ENCODE measurements at regions of chr19 and their contacts with region 1.

Region 1: GRCh38 chr19:23321948-23322549 is 71.9 kb upstream of the ZNF724 start:
- DNase-seq: no peak
- ATAC-seq: peak in 1 of 8 donors; percentile 24
- H3K4me3 ChIP-seq: no peak overlapping the region
- H3K27ac ChIP-seq: no peak overlapping the region
- H3K4me1 ChIP-seq: no peaks in the 10 kb centered on the region
- H3K27me3 ChIP-seq: no peaks in the 10 kb centered on the region
- CTCF ChIP-seq: no peak

Region 2: GRCh38 chr19:23378948-23379347 is 56.9 kb after region 1 on chr19:
- intact Hi-C with region 1: no loop called
- DNase-seq: no peak
- ATAC-seq: peak; percentile 51 to 87 (median 74)
- H3K4me3 ChIP-seq: peak overlapping the region in 5 of 10 donors; percentile 8 to 28 (median 18)
- H3K27ac ChIP-seq: peak overlapping the region; percentile 37 to 85 (median 70)
- H3K4me1 ChIP-seq: peaks cover 4 to 59% (median 30%) of the 10 kb centered on the region in 9 donors
- H3K27me3 ChIP-seq: no peaks in the 10 kb centered on the region
- CTCF ChIP-seq: no peak

Region 3: DNA sequence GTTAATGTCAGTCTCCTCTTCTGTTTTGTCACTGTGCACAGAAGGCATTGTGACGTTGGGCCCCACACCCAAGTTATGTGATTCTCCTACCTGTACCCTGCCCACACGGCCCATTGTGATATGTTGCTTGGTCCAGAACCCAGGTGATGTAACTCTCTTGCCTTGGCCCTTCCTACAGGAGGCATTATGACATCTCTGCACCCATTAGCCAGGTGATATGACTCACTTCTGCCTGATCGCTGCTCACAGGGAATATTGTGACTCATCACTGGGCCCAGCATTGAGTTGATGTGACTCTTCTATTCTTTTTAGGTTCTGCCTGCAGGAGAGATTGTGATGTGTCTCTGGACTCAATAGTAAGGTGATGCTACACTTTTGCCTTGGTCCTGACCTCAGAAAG is 138.6 kb after region 1 on chr19:
- intact Hi-C with region 1: loop called in 2 of 10 experiments (anchors 1 to 5 kb)
- DNase-seq: no peak
- ATAC-seq: no peak
- H3K4me3 ChIP-seq: no peak overlapping the region
- H3K27ac ChIP-seq: no peak overlapping the region
- H3K4me1 ChIP-seq: no peaks in the 10 kb centered on the region
- H3K27me3 ChIP-seq: no peaks in the 10 kb centered on the region
- CTCF ChIP-seq: no peak

Region 4: DNA sequence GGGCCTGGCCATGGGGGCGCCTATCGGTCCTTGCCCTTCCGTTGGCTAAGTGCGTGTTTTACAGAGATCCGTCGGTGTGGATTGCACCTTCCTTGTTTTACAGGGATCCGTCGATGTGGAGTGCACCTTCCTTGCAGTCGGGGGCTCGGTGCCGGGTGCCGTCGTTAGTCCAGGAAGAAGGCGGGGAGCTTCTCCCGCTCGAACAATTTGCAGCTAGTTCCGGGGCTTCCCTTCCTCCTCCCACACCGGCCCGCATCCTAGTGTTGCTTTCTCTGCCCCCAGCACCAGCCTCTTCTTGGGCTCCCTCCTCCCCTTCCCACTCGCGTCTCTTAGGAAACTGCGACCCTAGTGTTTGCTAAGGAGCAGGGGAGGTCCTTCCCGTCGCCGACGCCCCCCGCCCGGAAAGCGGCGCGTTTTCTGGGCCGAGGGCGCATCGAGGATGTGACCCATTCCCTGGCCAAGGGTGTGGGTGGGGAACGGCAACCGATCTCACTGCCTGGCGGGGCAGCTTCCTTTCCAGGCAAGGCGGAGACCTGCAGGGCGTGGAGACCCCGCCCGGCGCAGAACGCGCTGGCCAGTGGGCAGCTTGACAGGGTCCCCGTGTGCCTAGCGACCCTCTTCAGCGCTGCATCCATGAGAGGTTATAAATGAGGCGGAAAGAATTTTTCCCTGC is 149.0 kb after region 1 on chr19:
- intact Hi-C with region 1: loop called in 4 of 10 experiments (anchors 2 to 5 kb)
- DNase-seq: no peak
- ATAC-seq: no peak
- H3K4me3 ChIP-seq: peak overlapping the region; percentile 12 to 52 (median 33)
- H3K27ac ChIP-seq: no peak overlapping the region
- H3K4me1 ChIP-seq: peaks cover 0 to 8% (median 0%) of the 10 kb centered on the region in 9 donors
- H3K27me3 ChIP-seq: peaks cover 0 to 37% (median 16%) of the 10 kb centered on the region in 7 donors
- CTCF ChIP-seq: no peak

Measured in heart right ventricle (tissue), 16 donors.